Left lung (tissue), 14 donors: ENCODE measurements at regions of chr4 and their contacts with region 1.

Region 1: DNA sequence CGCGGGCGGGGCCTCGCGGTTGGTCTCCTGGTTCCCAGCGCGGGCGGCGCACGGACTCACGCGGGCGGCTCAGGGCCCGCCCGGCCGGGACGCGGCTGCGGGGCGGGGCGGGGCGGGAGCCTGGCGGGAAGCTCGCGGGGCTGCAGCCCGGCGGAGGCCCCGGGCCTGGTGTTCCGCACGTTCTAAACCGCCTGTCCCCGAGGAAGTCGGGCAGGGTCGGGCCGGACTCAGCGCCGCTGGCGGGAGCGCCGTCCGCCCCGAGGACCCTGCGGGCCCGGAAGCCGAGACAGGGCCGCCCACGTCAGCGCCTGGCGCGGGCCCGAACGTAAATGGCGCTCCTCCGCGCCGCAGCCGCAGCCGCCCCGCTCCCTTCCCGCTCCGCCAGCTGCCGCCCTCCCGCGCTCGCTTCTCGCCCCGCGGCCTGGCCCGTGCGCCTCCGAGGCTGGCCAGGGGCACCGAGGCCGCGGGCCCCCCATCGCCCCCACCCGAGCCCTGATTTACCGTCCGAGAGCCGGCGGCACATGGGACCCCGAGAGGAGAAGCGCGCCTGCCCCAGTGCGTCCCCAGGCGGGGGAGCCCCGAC is 309 bp upstream of the CTBP1 start:
- DNase-seq: peak; percentile 89 to 95 (median 92)
- ATAC-seq: peak; percentile 68
- H3K4me3 ChIP-seq: peak overlapping the region; percentile 65 to 67
- H3K27ac ChIP-seq: peak overlapping the region; percentile 95 to 97
- H3K4me1 ChIP-seq: peaks cover 32 to 54% of the 10 kb centered on the region in 2 donors
- H3K27me3 ChIP-seq: no peaks in the 10 kb centered on the region
- CTCF ChIP-seq: no peak

Region 2: GRCh38 chr4:931960-932712 is 317.1 kb before region 1 on chr4 and contains the starts of genes GAK and TMEM175:
- intact Hi-C with region 1: no loop called
- DNase-seq: peak; percentile 95 to 100 (median 96)
- ATAC-seq: peak; percentile 98
- H3K4me3 ChIP-seq: peak within 1 kb of the TSS; percentile 95
- H3K27ac ChIP-seq: peak within 1 kb of the TSS; percentile 79 to 96
- H3K4me1 ChIP-seq: peaks cover 16 to 61% of the 10 kb centered on the region in 2 donors
- H3K27me3 ChIP-seq: no peaks in the 10 kb centered on the region
- CTCF ChIP-seq: peak in 1 of 2 donors; percentile 36
- polyA plus RNA-seq, gene GAK: 42.7 to 67.9 (median 49.7) TPM
- polyA plus RNA-seq, gene TMEM175: 24.4 to 38.7 (median 25.7) TPM

Region 3: GRCh38 chr4:1167247-1167949 is 81.8 kb before region 1 on chr4:
- intact Hi-C with region 1: loop called in 1 of 2 experiments (anchors 10 kb)
- DNase-seq: peak; percentile 72 to 95 (median 88)
- ATAC-seq: peak; percentile 91
- H3K4me3 ChIP-seq: peak overlapping the region; percentile 48 to 63
- H3K27ac ChIP-seq: peak overlapping the region in 1 of 2 donors; percentile 48
- H3K4me1 ChIP-seq: peaks cover 16 to 41% of the 10 kb centered on the region in 2 donors
- H3K27me3 ChIP-seq: peaks cover 23 to 47% of the 10 kb centered on the region in 2 donors
- CTCF ChIP-seq: peak; percentile 93

Region 4: GRCh38 chr4:1218634-1219565 is 30.3 kb before region 1 on chr4:
- intact Hi-C with region 1: no loop called
- DNase-seq: peak in 1 of 4 donors; percentile 53
- ATAC-seq: no peak
- H3K4me3 ChIP-seq: no peak overlapping the region
- H3K27ac ChIP-seq: peak overlapping the region; percentile 4 to 28
- H3K4me1 ChIP-seq: peaks cover 3 to 43% of the 10 kb centered on the region in 2 donors
- H3K27me3 ChIP-seq: no peaks in the 10 kb centered on the region
- CTCF ChIP-seq: no peak

Region 5: GRCh38 chr4:1346781-1347409 is 97.7 kb after region 1 on chr4 and contains the start of gene UVSSA:
- intact Hi-C with region 1: loop called in 1 of 2 experiments (anchors 10 kb)
- DNase-seq: peak; percentile 100
- ATAC-seq: peak; percentile 92
- H3K4me3 ChIP-seq: peak within 1 kb of the TSS; percentile 92 to 98
- H3K27ac ChIP-seq: peak within 1 kb of the TSS; percentile 99 to 100
- H3K4me1 ChIP-seq: peaks cover 11 to 41% of the 10 kb centered on the region in 2 donors
- H3K27me3 ChIP-seq: no peaks in the 10 kb centered on the region
- CTCF ChIP-seq: no peak
- polyA plus RNA-seq, gene UVSSA: 12.8 to 26.4 (median 17.8) TPM